ENCODE measurements at regions of chr12 and their contacts with region 1.

Region 1: GRCh38 chr12:54251667-54252284 is 28.1 kb downstream of the CBX5 start:
- DNase-seq: peak in 4 of 5 donors; percentile 36 to 52 (median 46)
- H3K4me3 ChIP-seq: no peak overlapping the region
- H3K4me3 Mint-ChIP-seq: no peak overlapping the region
- H3K27ac ChIP-seq: no peak overlapping the region
- H3K27ac Mint-ChIP-seq: peak overlapping the region in 1 of 7 donors; percentile 63
- H3K4me1 ChIP-seq: no peaks in the 10 kb centered on the region
- H3K4me1 Mint-ChIP-seq: peaks cover 4 to 9% (median 6%) of the 10 kb centered on the region in 4 donors
- H3K27me3 ChIP-seq: no peaks in the 10 kb centered on the region
- H3K27me3 Mint-ChIP-seq: no peaks in the 10 kb centered on the region

Region 2: DNA sequence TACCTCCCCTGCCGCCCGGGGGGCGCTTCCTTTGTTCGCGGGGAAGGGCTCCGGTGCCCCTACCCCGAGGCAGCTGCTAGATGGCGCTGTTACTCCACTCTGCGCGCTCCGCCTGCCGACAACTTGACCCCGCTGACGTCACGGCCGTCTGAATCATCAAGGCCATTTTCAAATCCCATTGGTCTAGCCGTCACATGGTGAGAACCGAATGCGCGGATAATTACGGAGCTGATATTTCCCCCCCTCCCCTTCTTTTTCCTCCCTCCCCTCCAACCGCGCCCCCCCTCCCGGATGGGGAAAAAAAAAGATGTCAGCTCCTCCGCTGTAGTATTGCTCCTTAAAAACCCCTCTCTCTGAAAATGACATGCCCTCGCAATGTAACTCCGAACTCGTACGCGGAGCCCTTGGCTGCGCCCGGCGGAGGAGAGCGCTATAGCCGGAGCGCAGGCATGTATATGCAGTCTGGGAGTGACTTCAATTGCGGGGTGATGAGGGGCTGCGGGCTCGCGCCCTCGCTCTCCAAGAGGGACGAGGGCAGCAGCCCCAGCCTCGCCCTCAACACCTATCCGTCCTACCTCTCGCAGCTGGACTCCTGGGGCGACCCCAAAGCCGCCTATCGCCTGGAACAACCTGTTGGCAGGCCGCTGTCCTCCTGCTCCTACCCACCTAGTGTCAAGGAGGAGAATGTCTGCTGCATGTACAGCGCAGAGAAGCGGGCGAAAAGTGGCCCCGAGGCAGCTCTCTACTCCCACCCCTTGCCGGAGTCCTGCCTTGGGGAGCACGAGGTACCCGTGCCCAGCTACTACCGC is 266.7 kb before region 1 on chr12 and contains the start of gene HOXC10:
- CTCF ChIA-PET with region 1: no interaction called
- POLR2A ChIA-PET with region 1: no interaction called
- intact Hi-C with region 1: no loop called
- DNase-seq: peak in 4 of 5 donors; percentile 42 to 73 (median 45)
- H3K4me3 ChIP-seq: no peak within 1 kb of the TSS
- H3K4me3 Mint-ChIP-seq: peak within 1 kb of the TSS; percentile 48 to 88 (median 70)
- H3K27ac ChIP-seq: no peak within 1 kb of the TSS
- H3K27ac Mint-ChIP-seq: peak within 1 kb of the TSS in 5 of 7 donors; percentile 42 to 93 (median 75)
- H3K4me1 ChIP-seq: peaks cover 36% of the 10 kb centered on the region
- H3K4me1 Mint-ChIP-seq: peaks cover 15 to 57% (median 29%) of the 10 kb centered on the region in 4 donors
- H3K27me3 ChIP-seq: peaks cover 94% of the 10 kb centered on the region
- H3K27me3 Mint-ChIP-seq: peaks cover 76 to 82% of the 10 kb centered on the region in 2 donors
- total RNA-seq, gene HOXC10: not detected

Region 3: GRCh38 chr12:54240971-54241588 is 10.7 kb before region 1 on chr12:
- CTCF ChIA-PET with region 1: interaction called, 49 read pairs
- POLR2A ChIA-PET with region 1: no interaction called
- intact Hi-C with region 1: no loop called
- DNase-seq: no peak
- H3K4me3 ChIP-seq: no peak overlapping the region
- H3K4me3 Mint-ChIP-seq: no peak overlapping the region
- H3K27ac ChIP-seq: no peak overlapping the region
- H3K27ac Mint-ChIP-seq: peak overlapping the region in 4 of 7 donors; percentile 13 to 37 (median 18)
- H3K4me1 ChIP-seq: no peaks in the 10 kb centered on the region
- H3K4me1 Mint-ChIP-seq: peaks cover 0 to 5% (median 0%) of the 10 kb centered on the region in 4 donors
- H3K27me3 ChIP-seq: no peaks in the 10 kb centered on the region
- H3K27me3 Mint-ChIP-seq: no peaks in the 10 kb centered on the region

Measured in CD4-positive, alpha-beta memory T cell (primary cell).